ENCODE measurements at regions of chr17 and their contacts with region 1.

Region 1: DNA sequence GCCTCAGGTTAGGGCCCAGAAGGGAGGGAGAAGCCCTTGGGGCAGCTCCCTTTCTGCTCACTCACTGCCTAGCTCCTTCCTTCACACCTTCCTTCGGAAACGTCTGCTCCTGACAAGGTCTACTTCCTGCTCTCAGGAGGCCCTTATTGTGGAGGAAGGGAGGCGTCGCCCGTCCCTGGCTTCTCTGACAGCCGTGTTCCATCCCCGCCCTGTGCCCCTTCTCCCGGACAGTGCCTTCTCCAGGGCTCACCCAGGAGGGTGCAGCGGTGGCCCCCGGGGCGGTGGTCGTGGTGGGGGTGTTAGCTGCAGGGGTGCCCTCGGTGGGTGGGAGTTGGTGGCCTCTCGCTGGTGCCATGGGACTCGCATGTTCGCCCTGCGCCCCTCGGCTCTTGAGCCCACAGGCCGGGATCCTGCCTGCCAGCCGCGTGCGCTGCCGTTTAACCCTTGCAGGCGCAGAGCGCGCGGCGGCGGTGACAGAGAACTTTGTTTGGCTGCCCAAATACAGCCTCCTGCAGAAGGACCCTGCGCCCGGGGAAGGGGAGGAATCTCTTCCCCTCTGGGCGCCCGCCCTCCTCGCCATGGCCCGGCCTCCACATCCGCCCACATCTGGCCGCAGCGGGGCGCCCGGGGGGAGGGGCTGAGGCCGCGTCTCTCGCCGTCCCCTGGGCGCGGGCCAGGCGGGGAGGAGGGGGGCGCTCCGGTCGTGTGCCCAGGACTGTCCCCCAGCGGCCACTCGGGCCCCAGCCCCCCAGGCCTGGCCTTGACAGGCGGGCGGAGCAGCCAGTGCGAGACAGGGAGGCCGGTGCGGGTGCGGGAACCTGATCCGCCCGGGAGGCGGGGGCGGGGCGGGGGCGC is 231.9 kb downstream of the SEC14L1 start:
- DNase-seq: peak; percentile 82 to 86
- ATAC-seq: peak; percentile 85

Region 2: DNA sequence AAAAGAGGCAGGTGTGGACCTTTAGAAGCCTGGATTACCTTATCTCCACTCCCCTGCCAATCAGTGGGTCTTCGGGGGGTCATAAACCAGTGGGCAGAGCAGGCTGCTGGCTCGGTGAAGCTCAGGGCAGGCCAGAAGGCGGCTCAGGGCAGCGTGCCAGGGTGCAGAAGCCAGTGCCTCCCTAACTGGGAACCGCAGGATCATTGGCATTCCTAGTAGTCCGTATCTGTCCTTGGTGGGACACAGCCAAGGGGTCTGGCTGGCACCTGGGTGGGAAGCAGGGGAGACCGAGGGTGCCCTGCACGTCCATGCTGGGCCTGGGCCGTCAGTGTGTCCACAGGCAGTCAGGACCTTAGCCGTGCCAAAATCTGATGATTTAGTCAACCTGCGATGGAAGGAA is 155.1 kb before region 1 on chr17:
- intact Hi-C with region 1: no loop called
- DNase-seq: no peak
- ATAC-seq: peak; percentile 67

Region 3: DNA sequence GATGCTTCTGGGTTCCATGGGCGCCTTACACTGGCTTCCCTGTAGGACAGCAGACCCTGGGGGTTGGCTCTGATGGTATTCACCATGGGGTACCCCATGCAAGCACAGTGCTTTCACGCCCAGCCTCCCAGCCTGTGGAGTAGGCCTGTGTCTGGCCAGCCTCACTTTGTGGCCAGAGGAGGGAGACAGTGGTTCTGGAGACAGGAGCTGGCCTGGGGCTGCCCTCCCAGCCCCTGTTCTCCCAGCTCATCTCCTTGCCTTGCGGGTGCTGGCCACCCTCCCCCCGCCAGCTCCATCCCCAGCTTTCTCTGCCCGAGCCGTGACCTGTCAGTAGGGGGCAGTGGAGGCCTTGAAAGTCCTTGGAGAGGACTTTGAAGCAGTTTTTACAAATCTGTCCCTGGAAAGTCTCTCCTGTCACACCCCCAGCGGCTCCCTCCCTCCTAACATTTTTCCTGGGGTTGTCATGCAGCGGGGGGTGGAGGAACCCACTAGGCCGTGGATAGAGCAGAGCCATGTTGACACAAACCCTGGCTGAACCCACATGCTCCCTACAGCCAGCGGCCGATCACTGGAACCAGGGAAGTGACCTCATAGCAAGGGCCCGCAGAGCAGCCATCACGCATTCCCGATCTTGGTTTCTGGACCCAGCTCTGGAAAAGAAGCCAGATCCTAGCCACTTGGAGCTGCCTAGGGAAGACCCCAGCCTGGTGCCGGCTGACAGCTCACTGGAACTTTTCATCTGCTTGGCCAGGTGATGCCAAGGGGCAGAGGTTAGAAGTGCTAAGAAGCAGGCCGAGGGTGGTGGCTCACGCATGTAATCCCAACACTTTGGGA is 57.5 kb after region 1 on chr17:
- intact Hi-C with region 1: loop called in 1 of 2 experiments (anchors 10 kb)
- DNase-seq: peak; percentile 90
- ATAC-seq: peak; percentile 64